HEK293T (cell line): ENCODE measurements at regions of chr15 and their contacts with region 1.

Region 1: GRCh38 chr15:73240866-73241499 is 127.8 kb downstream of the HCN4 start:
- DNase-seq: peak; percentile 70

Region 2: GRCh38 chr15:73265536-73266153 is 24.7 kb after region 1 on chr15:
- CTCF ChIA-PET with region 1: interaction called, 21 read pairs
- POLR2A ChIA-PET with region 1: no interaction called
- DNase-seq: peak; percentile 67